Endothelial cell of umbilical vein (primary cell): ENCODE measurements at regions of chr12 and their contacts with region 1.

Region 1: DNA sequence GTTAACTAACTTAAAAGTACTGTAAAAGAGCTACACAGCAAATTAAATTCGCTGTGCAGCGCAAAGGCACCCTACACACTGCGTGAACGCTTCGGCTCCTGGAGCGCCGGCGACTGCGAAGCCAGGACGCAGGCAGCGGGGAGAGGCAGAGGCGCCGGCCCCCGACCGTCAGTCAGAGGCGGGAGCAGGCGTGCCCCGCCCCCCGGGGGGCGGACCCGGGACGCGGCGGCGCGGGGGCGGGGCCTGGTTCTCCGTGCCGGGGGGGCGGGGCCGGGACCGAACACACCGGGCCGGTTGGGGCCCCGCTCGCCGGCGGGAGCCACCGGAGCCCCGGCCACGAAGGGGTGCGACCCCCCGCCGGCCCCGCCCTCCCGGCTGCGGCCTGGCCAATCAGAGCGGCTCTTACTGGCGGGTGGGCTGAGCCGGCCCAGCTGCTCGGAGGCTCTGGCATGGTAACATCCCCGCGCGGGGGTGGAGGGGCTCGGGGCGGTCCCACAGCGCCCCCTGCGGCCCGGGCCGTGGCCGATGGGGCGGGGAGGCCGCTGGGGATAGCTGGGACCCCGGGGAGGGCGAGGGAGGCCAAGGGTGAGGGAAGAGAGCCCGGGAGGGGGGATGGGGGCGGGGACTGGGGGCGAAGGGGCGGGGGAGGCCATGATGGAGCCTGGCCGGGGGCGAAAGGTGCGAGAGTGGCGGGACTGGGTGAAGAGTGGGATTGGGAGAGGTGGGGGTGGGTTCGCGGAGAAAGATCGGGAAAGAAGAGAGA is at the start of gene PRPF40B:
- DNase-seq: peak; percentile 75
- H3K4me3 ChIP-seq: peak within 1 kb of the TSS; percentile 23 to 68 (median 36)
- H3K27ac ChIP-seq: no peak within 1 kb of the TSS
- H3K4me1 ChIP-seq: peaks cover 21% of the 10 kb centered on the region
- H3K27me3 ChIP-seq: peaks cover 4 to 10% of the 10 kb centered on the region in 2 experiments
- CTCF ChIP-seq: peak; percentile 42 to 66
- POLR2A ChIP-seq: peak; percentile 84
- total RNA-seq, gene PRPF40B: 9.5 and 9.9 TPM in 2 replicates

Region 2: DNA sequence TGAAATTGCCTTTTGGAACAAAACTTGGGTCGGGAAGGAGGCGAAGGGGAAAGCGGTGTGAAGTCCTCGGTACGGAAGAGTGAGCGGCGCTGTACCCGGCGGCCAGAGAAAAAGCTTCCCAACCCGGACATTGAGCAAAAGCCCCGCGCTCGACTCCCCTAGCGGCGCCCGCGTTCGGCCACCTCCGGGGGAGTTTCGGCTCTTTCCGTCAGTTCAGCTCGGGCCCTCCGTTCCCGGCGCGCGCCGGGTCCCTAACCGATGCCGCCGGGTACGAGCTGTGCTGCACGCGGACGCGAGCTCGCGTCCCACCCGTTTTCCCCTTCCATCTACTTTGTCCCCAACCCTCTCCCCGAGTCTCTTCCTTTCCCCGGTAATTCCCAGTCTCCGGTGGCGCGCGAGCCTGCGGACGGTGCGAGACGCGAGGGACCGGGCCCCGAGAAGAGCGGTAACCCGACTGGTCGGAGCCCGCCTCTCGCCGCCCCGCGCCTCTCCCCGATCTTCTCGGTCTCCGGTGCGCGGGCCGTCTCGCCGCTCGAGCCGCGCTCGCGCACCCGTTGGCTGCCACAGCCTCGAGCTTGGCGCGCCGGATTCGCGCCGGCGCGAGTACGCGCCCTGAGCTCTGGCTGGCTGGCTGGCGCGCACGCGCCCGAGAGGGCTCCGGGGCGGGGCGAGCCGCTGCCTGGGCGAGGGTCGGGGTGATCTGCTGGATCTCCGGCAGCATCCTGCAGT is 256.5 kb before region 1 on chr12:
- CTCF ChIA-PET with region 1: no interaction called
- POLR2A ChIA-PET with region 1: no interaction called
- dilution Hi-C with region 1: no loop called
- intact Hi-C with region 1: loop called (anchors 5 kb)
- DNase-seq: peak; percentile 97
- H3K4me3 ChIP-seq: peak overlapping the region; percentile 76 to 94 (median 85)
- H3K27ac ChIP-seq: peak overlapping the region; percentile 77
- H3K4me1 ChIP-seq: peaks cover 35% of the 10 kb centered on the region
- H3K27me3 ChIP-seq: no peaks in the 10 kb centered on the region
- CTCF ChIP-seq: peak in 1 of 2 donors; percentile 44
- POLR2A ChIP-seq: peak; percentile 46

Region 3: GRCh38 chr12:49580572-49581535 is 42.5 kb before region 1 on chr12:
- CTCF ChIA-PET with region 1: interaction called, 21 read pairs
- POLR2A ChIA-PET with region 1: no interaction called
- dilution Hi-C with region 1: no loop called
- intact Hi-C with region 1: no loop called
- DNase-seq: peak; percentile 65
- H3K4me3 ChIP-seq: no peak overlapping the region
- H3K27ac ChIP-seq: no peak overlapping the region
- H3K4me1 ChIP-seq: no peaks in the 10 kb centered on the region
- H3K27me3 ChIP-seq: no peaks in the 10 kb centered on the region
- CTCF ChIP-seq: peak; percentile 89 to 90
- POLR2A ChIP-seq: no peak

Region 4: GRCh38 chr12:49967042-49967776 is 343.9 kb after region 1 on chr12:
- CTCF ChIA-PET with region 1: no interaction called
- POLR2A ChIA-PET with region 1: no interaction called
- dilution Hi-C with region 1: no loop called
- intact Hi-C with region 1: no loop called
- DNase-seq: peak; percentile 79
- H3K4me3 ChIP-seq: peak overlapping the region in 2 of 3 experiments; percentile 14 to 24
- H3K27ac ChIP-seq: no peak overlapping the region
- H3K4me1 ChIP-seq: peaks cover 11% of the 10 kb centered on the region
- H3K27me3 ChIP-seq: peaks cover 16 to 18% of the 10 kb centered on the region in 2 experiments
- CTCF ChIP-seq: peak; percentile 76 to 98
- POLR2A ChIP-seq: no peak